ENCODE measurements at regions of chr14 and their contacts with region 1.

Region 1: DNA sequence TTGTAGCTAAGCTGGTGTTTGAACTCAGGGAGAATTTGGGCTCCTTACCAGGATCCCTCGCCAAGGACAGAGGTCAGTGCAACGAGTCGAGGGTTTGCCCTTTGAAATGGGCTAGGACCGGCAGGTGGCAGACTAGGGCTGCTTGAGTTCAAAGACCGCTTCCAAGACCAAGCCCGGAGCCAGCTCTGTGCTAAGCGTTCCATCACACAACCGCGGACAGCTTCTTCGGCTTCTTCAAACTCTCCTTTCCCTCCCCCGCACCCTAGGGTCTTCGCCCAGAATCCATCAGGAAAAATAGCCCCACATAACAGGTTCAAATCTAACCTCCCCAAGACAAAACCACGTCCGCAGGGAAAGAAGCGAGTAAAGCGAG is 705 bp upstream of the FLVCR2 start:
- DNase-seq: peak; percentile 88
- CTCF ChIP-seq: peak; percentile 73

Region 2: GRCh38 chr14:75497191-75497590 is 80.5 kb before region 1 on chr14:
- in situ Hi-C with region 1: no loop called
- DNase-seq: no peak
- CTCF ChIP-seq: peak; percentile 12

Region 3: GRCh38 chr14:75648066-75648838 is 70.5 kb after region 1 on chr14:
- in situ Hi-C with region 1: loop called (anchors 5 kb)
- DNase-seq: no peak
- CTCF ChIP-seq: no peak

Measured in GM13977 (cell line).